ENCODE measurements at regions of chr2 and their contacts with region 1.

Region 1: GRCh38 chr2:152335010-152335725 is at the start of gene FMNL2:
- DNase-seq: peak; percentile 81 to 92 (median 90)
- H3K4me3 ChIP-seq: peak within 1 kb of the TSS; percentile 64 to 100 (median 92)
- H3K27ac ChIP-seq: peak within 1 kb of the TSS; percentile 53 to 98 (median 95)
- H3K27me3 ChIP-seq: no peaks in the 10 kb centered on the region
- CTCF ChIP-seq: peak in 52 of 56 donors; percentile 12 to 74 (median 39)
- total RNA-seq, gene FMNL2: 118 to 440 (median 197) TPM

Region 2: GRCh38 chr2:151478011-151478410 is 857.2 kb before region 1 on chr2:
- intact Hi-C with region 1: no loop called
- DNase-seq: no peak
- H3K4me3 ChIP-seq: no peak overlapping the region
- H3K27ac ChIP-seq: no peak overlapping the region
- H3K27me3 ChIP-seq: no peaks in the 10 kb centered on the region
- CTCF ChIP-seq: no peak

Region 3: GRCh38 chr2:152189622-152190495 is 145.3 kb before region 1 on chr2:
- intact Hi-C with region 1: loop called (anchors 2 to 5 kb)
- DNase-seq: peak in 2 of 10 donors; percentile 26 to 69
- H3K4me3 ChIP-seq: no peak overlapping the region
- H3K27ac ChIP-seq: peak overlapping the region in 9 of 59 donors; percentile 3 to 62 (median 23)
- H3K27me3 ChIP-seq: no peaks in the 10 kb centered on the region
- CTCF ChIP-seq: peak; percentile 45 to 94 (median 86)

Region 4: DNA sequence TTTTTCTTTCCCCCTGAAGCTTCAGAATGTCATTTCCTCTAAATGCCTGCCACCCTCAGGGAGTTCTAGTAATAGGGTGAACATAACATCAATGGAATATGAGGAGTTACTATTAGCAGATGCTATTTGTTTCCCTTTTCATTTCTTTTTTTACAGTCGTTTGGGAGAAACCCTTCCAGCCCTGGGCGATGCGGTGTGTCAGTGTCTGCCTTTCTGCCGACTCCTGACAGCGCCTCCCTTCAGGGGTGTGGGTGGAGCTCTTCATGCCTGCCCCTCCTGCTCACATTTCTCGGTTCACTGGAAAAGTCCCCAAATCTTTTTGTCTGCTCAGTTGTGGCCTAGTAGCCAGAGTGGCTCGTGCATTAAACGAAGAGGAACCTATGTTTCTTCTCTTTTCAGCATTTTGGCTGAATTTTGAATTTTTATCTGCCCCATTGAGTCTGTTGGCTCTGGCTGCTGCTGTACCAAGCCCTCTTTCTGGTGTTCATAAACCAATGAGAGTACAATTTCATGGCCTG is 72.1 kb after region 1 on chr2:
- intact Hi-C with region 1: loop called (anchors 5 kb)
- DNase-seq: peak in 7 of 10 donors; percentile 52 to 78 (median 59)
- H3K4me3 ChIP-seq: peak overlapping the region in 51 of 59 donors; percentile 5 to 52 (median 27)
- H3K27ac ChIP-seq: peak overlapping the region in 57 of 59 donors; percentile 28 to 100 (median 78)
- H3K27me3 ChIP-seq: no peaks in the 10 kb centered on the region
- CTCF ChIP-seq: peak in 21 of 56 donors; percentile 2 to 32 (median 16)

Region 5: GRCh38 chr2:152466980-152467676 is 132.0 kb after region 1 on chr2:
- intact Hi-C with region 1: loop called in 1 of 2 experiments (anchors 5 kb)
- DNase-seq: peak in 1 of 10 donors; percentile 51
- H3K4me3 ChIP-seq: peak overlapping the region in 17 of 59 donors; percentile 0 to 40 (median 9)
- H3K27ac ChIP-seq: peak overlapping the region; percentile 84 to 100 (median 97)
- H3K27me3 ChIP-seq: no peaks in the 10 kb centered on the region
- CTCF ChIP-seq: no peak

Region 6: GRCh38 chr2:152566728-152567069 is 231.5 kb after region 1 on chr2:
- intact Hi-C with region 1: loop called in 1 of 2 experiments (anchors 10 kb)
- DNase-seq: no peak
- H3K4me3 ChIP-seq: no peak overlapping the region
- H3K27ac ChIP-seq: peak overlapping the region in 48 of 59 donors; percentile 3 to 96 (median 52)
- H3K27me3 ChIP-seq: no peaks in the 10 kb centered on the region
- CTCF ChIP-seq: no peak

Region 7: DNA sequence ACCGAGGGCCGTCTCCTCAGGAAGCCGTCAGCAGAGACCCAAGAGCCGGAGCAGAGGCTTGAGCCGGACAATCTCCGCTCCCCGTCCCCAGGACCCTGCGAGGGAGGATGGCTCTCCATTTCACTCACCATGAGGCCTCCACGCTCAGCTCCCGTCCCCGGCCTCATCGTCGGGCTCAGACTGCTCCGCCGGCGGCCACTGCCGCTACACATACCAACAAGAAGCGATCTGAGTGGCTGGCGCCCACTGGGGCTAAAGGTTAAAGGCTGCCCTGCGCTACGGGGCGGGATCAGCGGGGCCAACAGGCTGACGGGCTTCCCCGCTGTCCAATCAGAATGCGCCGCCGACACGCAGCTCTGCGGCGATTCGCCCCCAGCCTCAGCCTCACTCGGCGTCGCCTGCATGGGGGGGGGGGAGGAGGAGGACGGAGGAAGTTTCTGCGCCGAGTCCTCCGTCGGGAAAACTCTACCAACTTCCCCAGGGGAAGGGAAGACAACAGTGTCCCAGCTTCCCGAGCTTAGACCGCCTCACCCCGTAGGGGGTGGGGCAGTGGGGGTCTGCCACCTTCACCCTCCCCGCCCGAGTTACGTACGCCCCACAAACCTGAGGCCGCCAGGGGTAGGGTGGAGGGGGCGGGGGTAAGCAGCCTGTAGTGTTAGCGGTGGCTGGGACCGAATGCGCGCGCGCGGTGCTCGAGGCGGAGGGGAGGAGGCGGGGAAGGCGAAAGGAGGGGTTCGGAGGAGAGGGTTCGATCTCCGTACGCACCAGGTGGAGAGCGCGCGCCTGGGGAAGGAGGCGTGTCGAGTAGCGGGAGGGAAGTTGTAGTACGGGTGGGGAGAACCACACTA is 382.3 kb after region 1 on chr2 and contains the start of gene PRPF40A:
- intact Hi-C with region 1: loop called in 1 of 2 experiments (anchors 5 kb)
- DNase-seq: peak; percentile 99 to 100 (median 99)
- H3K4me3 ChIP-seq: peak within 1 kb of the TSS; percentile 71 to 99 (median 93)
- H3K27ac ChIP-seq: peak within 1 kb of the TSS; percentile 87 to 100 (median 99)
- H3K27me3 ChIP-seq: no peaks in the 10 kb centered on the region
- CTCF ChIP-seq: peak in 15 of 56 donors; percentile 5 to 40 (median 17)
- total RNA-seq, gene PRPF40A: 35.0 to 69.8 (median 50.7) TPM